Naive thymus-derived CD4-positive, alpha-beta T cell (primary cell): ENCODE measurements at regions of chr7 and their contacts with region 1.

Region 1: GRCh38 chr7:44633254-44634186 is 27.1 kb downstream of the OGDH start:
- DNase-seq: peak in 6 of 9 donors; percentile 5 to 53 (median 29)
- ATAC-seq: peak; percentile 55
- H3K4me3 ChIP-seq: no peak overlapping the region
- H3K4me3 Mint-ChIP-seq: peak overlapping the region in 5 of 10 donors; percentile 12 to 55 (median 39)
- H3K27ac ChIP-seq: peak overlapping the region; percentile 59
- H3K27ac Mint-ChIP-seq: peak overlapping the region; percentile 75 to 91 (median 86)
- H3K4me1 ChIP-seq: peaks cover 48 to 95% of the 10 kb centered on the region in 2 donors
- H3K4me1 Mint-ChIP-seq: peaks cover 53 to 89% (median 65%) of the 10 kb centered on the region in 7 donors
- H3K27me3 ChIP-seq: no peaks in the 10 kb centered on the region
- H3K27me3 Mint-ChIP-seq: no peaks in the 10 kb centered on the region

Region 2: GRCh38 chr7:43590862-43591550 is 1042.5 kb before region 1 on chr7:
- CTCF ChIA-PET with region 1: no interaction called
- POLR2A ChIA-PET with region 1: interaction called, 10 read pairs
- intact Hi-C with region 1: no loop called
- DNase-seq: peak in 1 of 9 donors; percentile 27
- ATAC-seq: no peak
- H3K4me3 ChIP-seq: peak overlapping the region; percentile 33
- H3K4me3 Mint-ChIP-seq: peak overlapping the region; percentile 62 to 92 (median 78)
- H3K27ac ChIP-seq: peak overlapping the region; percentile 67
- H3K27ac Mint-ChIP-seq: peak overlapping the region; percentile 15 to 94 (median 85)
- H3K4me1 ChIP-seq: peaks cover 77 to 78% of the 10 kb centered on the region in 2 donors
- H3K4me1 Mint-ChIP-seq: peaks cover 55 to 91% (median 80%) of the 10 kb centered on the region in 7 donors
- H3K27me3 ChIP-seq: no peaks in the 10 kb centered on the region
- H3K27me3 Mint-ChIP-seq: no peaks in the 10 kb centered on the region

Region 3: DNA sequence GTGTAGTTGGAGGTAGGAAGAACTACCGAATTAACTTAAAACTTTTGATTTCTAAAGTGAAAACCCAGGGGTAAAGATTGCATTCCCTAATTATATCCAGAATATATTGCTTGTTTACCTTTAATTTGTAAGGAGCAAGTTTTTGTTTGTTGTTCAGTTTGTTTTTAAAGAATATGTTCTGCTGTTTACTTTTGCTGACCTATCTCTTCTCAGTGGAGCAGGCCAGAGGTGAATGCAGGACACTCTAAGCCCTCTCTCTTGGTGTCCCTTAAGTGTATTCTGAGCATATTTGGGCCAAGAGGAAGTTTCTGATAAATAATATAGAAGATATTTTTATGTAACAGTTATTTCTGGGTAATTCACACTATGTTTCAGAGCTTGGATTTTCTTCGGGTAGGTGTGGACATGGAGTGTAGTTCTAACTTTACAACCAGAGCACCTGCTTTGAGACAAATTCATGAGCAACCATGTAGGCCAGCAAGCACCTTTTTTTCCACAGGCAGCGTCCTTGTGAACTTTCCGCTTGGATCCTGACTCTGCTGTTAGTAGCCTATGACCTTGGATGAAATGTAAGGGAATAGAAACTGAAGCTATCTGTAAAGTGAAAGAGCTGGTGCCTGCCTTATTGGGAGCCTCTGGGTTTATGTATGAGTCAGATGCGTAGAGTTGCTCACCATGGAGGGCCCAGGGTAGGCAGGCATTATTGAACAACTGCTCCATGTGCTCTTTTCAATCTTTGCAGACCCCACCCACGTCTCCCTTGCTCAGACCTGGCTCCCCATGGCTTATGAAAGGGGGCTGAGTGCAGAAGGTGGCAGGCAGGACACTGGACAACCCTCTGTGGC is 11.0 kb before region 1 on chr7:
- CTCF ChIA-PET with region 1: no interaction called
- POLR2A ChIA-PET with region 1: interaction called, 5 read pairs
- intact Hi-C with region 1: loop called in 1 of 2 experiments (anchors 1 kb)
- DNase-seq: peak in 1 of 9 donors; percentile 44
- ATAC-seq: peak; percentile 65
- H3K4me3 ChIP-seq: peak overlapping the region; percentile 9
- H3K4me3 Mint-ChIP-seq: peak overlapping the region in 4 of 10 donors; percentile 14 to 80 (median 40)
- H3K27ac ChIP-seq: no peak overlapping the region
- H3K27ac Mint-ChIP-seq: peak overlapping the region in 8 of 9 donors; percentile 11 to 95 (median 63)
- H3K4me1 ChIP-seq: peaks cover 18 to 82% of the 10 kb centered on the region in 2 donors
- H3K4me1 Mint-ChIP-seq: peaks cover 41 to 85% (median 62%) of the 10 kb centered on the region in 7 donors
- H3K27me3 ChIP-seq: no peaks in the 10 kb centered on the region
- H3K27me3 Mint-ChIP-seq: no peaks in the 10 kb centered on the region

Region 4: DNA sequence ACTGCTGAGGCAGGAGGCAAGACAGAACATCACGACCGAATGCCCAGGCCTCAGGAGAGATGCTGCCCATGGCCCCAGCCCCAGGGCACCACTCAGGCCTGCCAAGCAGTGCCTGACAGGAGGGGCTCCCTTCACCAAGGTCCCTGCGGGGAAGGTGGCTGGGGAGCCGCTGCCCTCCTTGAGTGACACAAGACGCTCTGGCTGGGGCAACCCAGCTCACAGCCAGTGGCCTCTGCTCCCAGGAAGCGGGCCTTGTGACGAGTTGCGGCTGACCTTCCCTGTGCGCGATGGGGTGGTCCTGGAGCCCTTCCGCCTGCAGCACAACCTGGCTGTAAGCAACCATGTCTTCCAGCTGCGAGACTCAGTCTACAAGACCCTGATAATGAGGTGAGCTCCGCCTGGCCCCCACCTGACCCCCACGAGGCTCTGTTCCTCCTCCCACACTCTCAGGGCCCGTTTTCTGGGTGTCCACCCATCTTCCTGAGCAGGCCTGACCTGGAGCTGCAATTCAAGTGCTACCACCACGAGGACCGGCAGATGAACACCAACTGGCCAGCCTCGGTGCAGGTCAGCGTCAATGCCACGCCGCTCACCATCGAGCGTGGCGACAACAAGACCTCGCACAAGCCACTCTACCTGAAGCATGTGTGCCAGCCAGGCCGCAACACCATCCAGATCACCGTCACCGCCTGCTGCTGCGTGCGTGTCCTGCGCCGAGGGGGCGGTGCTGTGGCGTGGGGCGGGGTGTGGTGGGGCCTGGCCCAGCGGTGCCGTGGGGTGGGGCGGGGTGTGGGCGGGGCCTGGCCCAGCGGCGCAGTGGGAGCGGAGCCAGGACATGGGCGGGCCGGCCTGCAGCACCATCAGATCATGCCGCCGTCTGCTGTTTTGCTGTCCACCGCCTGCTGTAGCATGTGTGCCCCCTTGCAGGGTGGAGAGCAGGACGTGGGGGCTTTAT is 128.0 kb after region 1 on chr7:
- CTCF ChIA-PET with region 1: no interaction called
- POLR2A ChIA-PET with region 1: no interaction called
- intact Hi-C with region 1: no loop called
- DNase-seq: no peak
- ATAC-seq: no peak
- H3K4me3 ChIP-seq: no peak overlapping the region
- H3K4me3 Mint-ChIP-seq: no peak overlapping the region
- H3K27ac ChIP-seq: no peak overlapping the region
- H3K27ac Mint-ChIP-seq: no peak overlapping the region
- H3K4me1 ChIP-seq: no peaks in the 10 kb centered on the region
- H3K4me1 Mint-ChIP-seq: no peaks in the 10 kb centered on the region
- H3K27me3 ChIP-seq: no peaks in the 10 kb centered on the region
- H3K27me3 Mint-ChIP-seq: no peaks in the 10 kb centered on the region